Activated CD4-positive, alpha-beta memory T cell treated with anti-CD3 and anti-CD28 coated beads for 36 hours (primary cell): ENCODE measurements at regions of chr10 and their contacts with region 1.

Region 1: GRCh38 chr10:80078448-80079311 is at the start of gene TMEM254:
- DNase-seq: peak; percentile 94
- H3K4me3 Mint-ChIP-seq: peak within 1 kb of the TSS; percentile 97
- H3K27ac Mint-ChIP-seq: peak within 1 kb of the TSS; percentile 89
- H3K4me1 Mint-ChIP-seq: peaks cover 37% of the 10 kb centered on the region
- H3K27me3 Mint-ChIP-seq: no peaks in the 10 kb centered on the region
- total RNA-seq, gene TMEM254: 11.6 to 12.3 TPM

Region 2: GRCh38 chr10:80064120-80064886 is 14.4 kb before region 1 on chr10:
- CTCF ChIA-PET with region 1: interaction called, 5 read pairs
- POLR2A ChIA-PET with region 1: no interaction called
- intact Hi-C with region 1: loop called (anchors 2 kb)
- DNase-seq: no peak
- H3K4me3 Mint-ChIP-seq: no peak overlapping the region
- H3K27ac Mint-ChIP-seq: no peak overlapping the region
- H3K4me1 Mint-ChIP-seq: no peaks in the 10 kb centered on the region
- H3K27me3 Mint-ChIP-seq: peaks cover 3% of the 10 kb centered on the region

Region 3: DNA sequence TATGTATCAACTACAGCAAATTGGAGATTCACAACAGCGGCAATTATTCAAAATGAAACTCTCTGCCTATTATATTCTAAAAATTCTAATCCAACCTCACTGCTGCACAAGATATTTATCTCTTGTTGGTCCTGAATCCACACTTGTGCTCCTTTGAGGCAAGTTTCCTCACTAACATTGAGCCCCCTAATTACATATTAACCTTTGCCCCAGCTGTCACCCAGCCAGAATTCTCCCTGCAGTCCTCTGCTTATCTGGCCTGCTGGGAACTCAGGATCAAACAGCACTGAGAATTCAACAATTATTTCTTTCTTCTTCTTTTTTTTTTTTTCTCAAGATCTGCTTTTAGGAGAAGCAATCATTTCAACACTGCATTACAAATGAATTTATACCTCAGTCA is 32.3 kb after region 1 on chr10:
- CTCF ChIA-PET with region 1: no interaction called
- POLR2A ChIA-PET with region 1: interaction called, 3 read pairs
- intact Hi-C with region 1: loop called (anchors 1 kb)
- DNase-seq: no peak
- H3K4me3 Mint-ChIP-seq: no peak overlapping the region
- H3K27ac Mint-ChIP-seq: peak overlapping the region; percentile 18
- H3K4me1 Mint-ChIP-seq: peaks cover 15% of the 10 kb centered on the region
- H3K27me3 Mint-ChIP-seq: no peaks in the 10 kb centered on the region

Region 4: GRCh38 chr10:80518807-80519360 is 440.2 kb after region 1 on chr10:
- CTCF ChIA-PET with region 1: no interaction called
- POLR2A ChIA-PET with region 1: no interaction called
- intact Hi-C with region 1: no loop called
- DNase-seq: no peak
- H3K4me3 Mint-ChIP-seq: no peak overlapping the region
- H3K27ac Mint-ChIP-seq: peak overlapping the region; percentile 0
- H3K4me1 Mint-ChIP-seq: peaks cover 27% of the 10 kb centered on the region
- H3K27me3 Mint-ChIP-seq: no peaks in the 10 kb centered on the region